ENCODE measurements at regions of chr5 and their contacts with region 1.

Region 1: GRCh38 chr5:96595300-96596090 is 66.7 kb upstream of the CAST start:
- ATAC-seq: no peak
- H3K4me3 ChIP-seq: no peak overlapping the region
- H3K27ac ChIP-seq: no peak overlapping the region
- H3K4me1 ChIP-seq: peaks cover 0 to 20% of the 10 kb centered on the region in 2 donors

Region 2: GRCh38 chr5:95803284-95804148 is 792.0 kb before region 1 on chr5:
- in situ Hi-C with region 1: no loop called
- ATAC-seq: peak in 4 of 8 experiments; percentile 37 to 58 (median 44)
- H3K4me3 ChIP-seq: no peak overlapping the region
- H3K27ac ChIP-seq: no peak overlapping the region
- H3K4me1 ChIP-seq: no peaks in the 10 kb centered on the region

Region 3: DNA sequence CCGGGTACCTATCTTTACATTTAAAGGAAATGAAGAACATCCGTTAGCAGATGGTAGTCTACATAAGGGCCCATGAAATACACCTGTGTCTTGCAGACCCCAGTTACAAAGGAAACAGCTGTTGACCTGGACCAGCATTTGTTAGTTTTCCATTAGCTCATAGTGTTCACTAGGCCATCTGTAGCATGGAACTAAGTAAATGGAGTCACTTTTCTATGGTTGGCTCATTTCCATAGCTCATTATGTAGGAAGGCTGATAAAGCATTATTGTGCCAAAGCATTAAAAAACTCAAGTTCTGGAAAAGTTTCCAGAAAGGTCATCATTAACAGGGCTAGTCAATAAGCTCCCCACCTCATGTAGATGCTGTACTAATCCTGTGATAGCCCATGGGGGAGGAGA is 224.5 kb before region 1 on chr5:
- in situ Hi-C with region 1: loop called in 2 of 9 experiments (anchors 25 kb)
- ATAC-seq: no peak
- H3K4me3 ChIP-seq: no peak overlapping the region
- H3K27ac ChIP-seq: no peak overlapping the region
- H3K4me1 ChIP-seq: peaks cover 15 to 17% of the 10 kb centered on the region in 2 donors

Region 4: DNA sequence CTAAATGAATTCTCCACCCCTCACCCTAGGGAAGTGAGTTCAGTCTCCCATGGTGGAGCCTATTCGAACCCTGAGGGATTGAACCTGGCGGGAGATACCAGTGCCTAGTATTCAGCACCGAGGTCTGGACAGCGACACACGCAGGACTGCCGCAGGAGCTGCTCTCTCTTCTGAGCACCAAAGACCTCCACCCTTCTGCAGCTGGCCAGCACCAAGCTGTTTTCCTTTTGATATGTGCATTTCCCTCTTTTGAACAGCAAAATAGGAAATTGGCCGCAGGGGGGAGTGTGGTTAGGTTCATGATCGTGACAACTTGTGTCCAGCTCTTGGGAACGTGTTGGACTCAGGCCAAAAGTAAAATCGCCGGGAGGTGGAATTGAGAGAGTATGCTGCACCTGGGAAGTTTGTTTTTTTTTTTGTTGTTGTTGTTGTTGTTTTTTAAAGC is 161.3 kb before region 1 on chr5:
- in situ Hi-C with region 1: loop called in 1 of 9 experiments (anchors 25 kb)
- ATAC-seq: peak; percentile 76 to 98 (median 81)
- H3K4me3 ChIP-seq: peak overlapping the region; percentile 40 to 62 (median 58)
- H3K27ac ChIP-seq: no peak overlapping the region
- H3K4me1 ChIP-seq: peaks cover 4 to 32% of the 10 kb centered on the region in 2 donors

Region 5: DNA sequence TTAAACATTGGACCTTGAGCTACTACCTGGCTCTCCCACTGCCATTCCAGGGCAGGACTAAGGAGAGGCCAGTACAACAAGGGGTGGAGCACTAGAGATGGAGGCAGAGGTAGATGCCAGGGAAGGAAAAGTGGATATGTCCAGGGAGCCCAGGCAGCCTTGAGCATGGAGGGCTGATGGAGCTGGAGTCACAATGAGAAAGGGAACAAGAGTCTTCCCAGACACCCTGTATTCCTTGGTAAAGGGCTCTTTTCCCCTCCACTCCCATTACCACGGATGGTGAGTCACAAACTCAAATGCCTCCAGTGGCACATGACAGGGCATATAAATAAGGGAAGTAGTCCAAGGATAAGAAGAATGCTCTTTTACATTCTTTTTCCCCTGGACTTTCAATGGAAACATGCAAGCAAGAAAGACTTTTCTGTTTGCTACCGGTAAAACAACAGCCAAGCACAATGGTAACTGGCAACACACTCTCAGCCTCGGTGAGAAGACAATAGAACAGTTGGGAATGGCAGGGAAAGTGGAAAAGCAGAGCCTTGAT is 195.5 kb after region 1 on chr5:
- in situ Hi-C with region 1: no loop called
- ATAC-seq: peak in 7 of 8 experiments; percentile 48 to 86 (median 64)
- H3K4me3 ChIP-seq: no peak overlapping the region
- H3K27ac ChIP-seq: no peak overlapping the region
- H3K4me1 ChIP-seq: peaks cover 0 to 6% of the 10 kb centered on the region in 2 donors

Region 6: DNA sequence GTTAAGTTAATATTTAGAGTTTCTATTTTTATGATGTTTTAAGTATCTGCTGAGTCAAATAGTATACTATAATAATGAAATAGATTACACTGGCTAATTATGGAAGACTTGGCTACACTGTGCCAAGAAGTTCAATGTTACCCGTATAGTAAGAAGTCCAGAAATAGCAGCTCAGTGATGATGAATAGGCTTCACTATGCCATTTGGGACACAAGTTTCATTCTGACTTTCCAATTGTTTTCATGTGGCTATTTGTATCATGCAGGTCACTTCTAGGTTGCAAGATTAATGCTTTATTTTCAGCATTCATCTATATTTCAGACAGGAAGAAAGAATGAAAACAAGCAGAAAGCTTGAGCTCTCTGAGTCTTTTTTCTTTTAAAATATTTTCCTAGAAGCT is 782.1 kb after region 1 on chr5:
- in situ Hi-C with region 1: no loop called
- ATAC-seq: no peak
- H3K4me3 ChIP-seq: no peak overlapping the region
- H3K27ac ChIP-seq: no peak overlapping the region
- H3K4me1 ChIP-seq: no peaks in the 10 kb centered on the region

Measured in motor neuron (in vitro differentiated cells).